ENCODE measurements at regions of chr3 and their contacts with region 1.

Region 1: GRCh38 chr3:177197041-177197727 is at the start of gene TBL1XR1:
- DNase-seq: peak; percentile 78 to 93 (median 90)
- ATAC-seq: peak; percentile 81
- H3K4me3 ChIP-seq: peak within 1 kb of the TSS; percentile 91
- H3K4me3 Mint-ChIP-seq: peak within 1 kb of the TSS; percentile 93 to 99 (median 98)
- H3K27ac ChIP-seq: peak within 1 kb of the TSS; percentile 94
- H3K27ac Mint-ChIP-seq: peak within 1 kb of the TSS; percentile 94 to 100 (median 98)
- H3K4me1 ChIP-seq: peaks cover 40 to 48% of the 10 kb centered on the region in 2 donors
- H3K4me1 Mint-ChIP-seq: peaks cover 35 to 68% (median 64%) of the 10 kb centered on the region in 7 donors
- H3K27me3 ChIP-seq: no peaks in the 10 kb centered on the region
- H3K27me3 Mint-ChIP-seq: peaks cover 0 to 2% (median 0%) of the 10 kb centered on the region in 5 donors
- total RNA-seq, gene TBL1XR1: 98.9 to 173 (median 133) TPM

Region 2: GRCh38 chr3:176663837-176664831 is 533.0 kb before region 1 on chr3:
- CTCF ChIA-PET with region 1: no interaction called
- POLR2A ChIA-PET with region 1: no interaction called
- intact Hi-C with region 1: no loop called
- DNase-seq: no peak
- ATAC-seq: no peak
- H3K4me3 ChIP-seq: no peak overlapping the region
- H3K4me3 Mint-ChIP-seq: no peak overlapping the region
- H3K27ac ChIP-seq: no peak overlapping the region
- H3K27ac Mint-ChIP-seq: no peak overlapping the region
- H3K4me1 ChIP-seq: no peaks in the 10 kb centered on the region
- H3K4me1 Mint-ChIP-seq: no peaks in the 10 kb centered on the region
- H3K27me3 ChIP-seq: no peaks in the 10 kb centered on the region
- H3K27me3 Mint-ChIP-seq: peaks cover 0 to 18% (median 3%) of the 10 kb centered on the region in 5 donors

Region 3: GRCh38 chr3:177109688-177110330 is 87.4 kb before region 1 on chr3:
- CTCF ChIA-PET with region 1: interaction called, 5 read pairs
- POLR2A ChIA-PET with region 1: interaction called, 13 read pairs
- intact Hi-C with region 1: no loop called
- DNase-seq: peak in 7 of 9 donors; percentile 17 to 70 (median 60)
- ATAC-seq: peak; percentile 92
- H3K4me3 ChIP-seq: no peak overlapping the region
- H3K4me3 Mint-ChIP-seq: peak overlapping the region; percentile 7 to 79 (median 60)
- H3K27ac ChIP-seq: peak overlapping the region; percentile 60
- H3K27ac Mint-ChIP-seq: peak overlapping the region in 8 of 9 donors; percentile 84 to 95 (median 89)
- H3K4me1 ChIP-seq: peaks cover 16 to 36% of the 10 kb centered on the region in 2 donors
- H3K4me1 Mint-ChIP-seq: peaks cover 47 to 89% (median 77%) of the 10 kb centered on the region in 7 donors
- H3K27me3 ChIP-seq: no peaks in the 10 kb centered on the region
- H3K27me3 Mint-ChIP-seq: no peaks in the 10 kb centered on the region

Region 4: GRCh38 chr3:177179281-177180067 is 17.7 kb before region 1 on chr3:
- CTCF ChIA-PET with region 1: no interaction called
- POLR2A ChIA-PET with region 1: interaction called, 5 read pairs
- intact Hi-C with region 1: loop called (anchors 2 kb)
- DNase-seq: no peak
- ATAC-seq: no peak
- H3K4me3 ChIP-seq: no peak overlapping the region
- H3K4me3 Mint-ChIP-seq: peak overlapping the region in 9 of 10 donors; percentile 21 to 84 (median 35)
- H3K27ac ChIP-seq: no peak overlapping the region
- H3K27ac Mint-ChIP-seq: peak overlapping the region in 8 of 9 donors; percentile 19 to 92 (median 54)
- H3K4me1 ChIP-seq: peaks cover 5 to 16% of the 10 kb centered on the region in 2 donors
- H3K4me1 Mint-ChIP-seq: peaks cover 37 to 85% (median 74%) of the 10 kb centered on the region in 7 donors
- H3K27me3 ChIP-seq: no peaks in the 10 kb centered on the region
- H3K27me3 Mint-ChIP-seq: no peaks in the 10 kb centered on the region

Region 5: DNA sequence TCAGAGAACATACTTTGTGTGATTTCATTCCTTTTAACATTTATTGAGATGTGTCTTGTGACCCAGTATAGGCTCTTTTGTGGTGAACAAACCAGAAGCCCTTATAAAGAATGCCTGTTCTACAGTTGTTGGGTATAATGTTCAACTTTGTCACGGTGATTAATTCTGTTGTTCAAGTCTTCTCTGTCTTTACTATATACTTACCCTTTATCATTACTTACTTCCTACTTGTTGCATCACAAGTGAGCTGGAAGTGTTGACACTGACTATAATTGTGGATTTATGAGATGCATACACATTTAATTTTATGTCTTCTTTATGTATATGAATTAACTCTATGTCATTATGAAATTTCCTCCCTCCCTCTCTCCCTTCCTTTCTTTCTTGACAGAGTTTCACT is 59.8 kb after region 1 on chr3:
- CTCF ChIA-PET with region 1: no interaction called
- POLR2A ChIA-PET with region 1: interaction called, 3 read pairs
- intact Hi-C with region 1: loop called in 1 of 2 experiments (anchors 2 kb)
- DNase-seq: no peak
- ATAC-seq: no peak
- H3K4me3 ChIP-seq: no peak overlapping the region
- H3K4me3 Mint-ChIP-seq: no peak overlapping the region
- H3K27ac ChIP-seq: no peak overlapping the region
- H3K27ac Mint-ChIP-seq: no peak overlapping the region
- H3K4me1 ChIP-seq: no peaks in the 10 kb centered on the region
- H3K4me1 Mint-ChIP-seq: peaks cover 0 to 3% (median 0%) of the 10 kb centered on the region in 7 donors
- H3K27me3 ChIP-seq: no peaks in the 10 kb centered on the region
- H3K27me3 Mint-ChIP-seq: no peaks in the 10 kb centered on the region

Region 6: DNA sequence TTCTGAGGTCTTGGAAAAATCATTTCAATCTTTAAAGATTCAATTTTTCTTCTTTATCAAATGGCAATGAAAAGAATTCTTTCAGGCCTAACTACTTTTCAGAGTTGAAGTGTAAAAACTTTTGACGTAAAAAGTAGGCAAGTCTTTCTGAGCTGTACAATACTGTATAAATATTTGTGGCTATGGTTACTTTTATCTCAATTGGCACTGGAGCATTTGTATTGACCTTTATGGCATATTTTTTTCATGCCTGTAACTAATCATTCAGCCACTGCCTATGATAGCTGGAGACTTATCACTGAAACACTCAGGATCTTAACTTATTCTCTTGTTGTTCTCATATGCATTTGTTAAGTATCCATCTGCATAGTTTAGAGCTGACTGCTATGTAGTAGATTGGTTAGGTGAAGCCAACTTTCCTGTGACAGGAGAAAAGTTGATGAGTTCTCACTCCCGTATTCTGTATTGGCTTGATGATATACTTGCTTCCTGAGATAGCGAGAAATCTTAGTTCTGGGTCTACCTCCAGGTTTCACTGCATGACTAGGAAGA is 290.5 kb after region 1 on chr3:
- CTCF ChIA-PET with region 1: no interaction called
- POLR2A ChIA-PET with region 1: no interaction called
- intact Hi-C with region 1: loop called in 1 of 2 experiments (anchors 5 kb)
- DNase-seq: no peak
- ATAC-seq: no peak
- H3K4me3 ChIP-seq: no peak overlapping the region
- H3K4me3 Mint-ChIP-seq: peak overlapping the region in 1 of 10 donors; percentile 24
- H3K27ac ChIP-seq: no peak overlapping the region
- H3K27ac Mint-ChIP-seq: no peak overlapping the region
- H3K4me1 ChIP-seq: peaks cover 0 to 12% of the 10 kb centered on the region in 2 donors
- H3K4me1 Mint-ChIP-seq: peaks cover 6 to 28% (median 22%) of the 10 kb centered on the region in 7 donors
- H3K27me3 ChIP-seq: no peaks in the 10 kb centered on the region
- H3K27me3 Mint-ChIP-seq: no peaks in the 10 kb centered on the region

Region 7: DNA sequence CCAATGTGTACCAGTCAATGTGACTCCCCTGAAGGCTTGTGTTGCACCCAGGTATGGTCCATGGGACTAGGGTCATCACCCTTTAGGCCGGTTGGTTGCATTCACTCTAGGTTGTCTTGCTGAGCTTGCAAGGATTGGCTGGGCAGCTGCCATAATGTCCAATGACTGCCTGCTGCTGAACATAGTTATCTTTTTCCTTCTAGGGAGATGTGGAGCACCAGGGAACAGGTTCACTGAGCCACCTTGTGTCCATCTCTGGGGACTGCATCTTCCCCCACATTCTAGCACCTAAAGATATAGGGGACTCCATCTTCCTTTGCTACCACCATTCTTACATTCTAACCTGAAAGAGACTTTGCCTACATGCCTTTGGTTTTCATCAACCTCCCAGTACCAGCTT is 580.5 kb after region 1 on chr3:
- CTCF ChIA-PET with region 1: no interaction called
- POLR2A ChIA-PET with region 1: no interaction called
- intact Hi-C with region 1: loop called (anchors 1 to 5 kb)
- DNase-seq: peak in 5 of 9 donors; percentile 10 to 35 (median 26)
- ATAC-seq: peak; percentile 65
- H3K4me3 ChIP-seq: no peak overlapping the region
- H3K4me3 Mint-ChIP-seq: peak overlapping the region in 1 of 10 donors; percentile 16
- H3K27ac ChIP-seq: no peak overlapping the region
- H3K27ac Mint-ChIP-seq: peak overlapping the region in 3 of 9 donors; percentile 21 to 55 (median 29)
- H3K4me1 ChIP-seq: peaks cover 9 to 18% of the 10 kb centered on the region in 2 donors
- H3K4me1 Mint-ChIP-seq: peaks cover 13 to 20% (median 15%) of the 10 kb centered on the region in 7 donors
- H3K27me3 ChIP-seq: no peaks in the 10 kb centered on the region
- H3K27me3 Mint-ChIP-seq: no peaks in the 10 kb centered on the region

Region 8: GRCh38 chr3:179147873-179148615 is 1950.9 kb after region 1 on chr3 and contains the start of gene PIK3CA:
- CTCF ChIA-PET with region 1: no interaction called
- POLR2A ChIA-PET with region 1: no interaction called
- intact Hi-C with region 1: loop called (anchors 5 kb)
- DNase-seq: peak; percentile 71 to 99 (median 95)
- ATAC-seq: peak; percentile 88
- H3K4me3 ChIP-seq: peak within 1 kb of the TSS; percentile 87
- H3K4me3 Mint-ChIP-seq: peak within 1 kb of the TSS in 7 of 10 donors; percentile 95 to 100 (median 97)
- H3K27ac ChIP-seq: peak within 1 kb of the TSS; percentile 93
- H3K27ac Mint-ChIP-seq: peak within 1 kb of the TSS in 8 of 9 donors; percentile 94 to 99 (median 96)
- H3K4me1 ChIP-seq: peaks cover 15 to 17% of the 10 kb centered on the region in 2 donors
- H3K4me1 Mint-ChIP-seq: peaks cover 27 to 47% (median 41%) of the 10 kb centered on the region in 7 donors
- H3K27me3 ChIP-seq: no peaks in the 10 kb centered on the region
- H3K27me3 Mint-ChIP-seq: peaks cover 0 to 21% (median 0%) of the 10 kb centered on the region in 5 donors
- total RNA-seq, gene PIK3CA: 27.4 to 58.1 (median 43.7) TPM